Activated T-helper 1 cell treated with anti-CD3 and anti-CD28 coated beads, Interleukin-12 subunit alpha, Interleukin-12 subunit beta, Interleukin-2, Interleukin-4 antibody, amounts not matched to agents 30 ng/mL and 10 ng/mL and 1 ng/mL, durations not matched to agents 14 hours and 24 hours and 36 hours (primary cell): ENCODE measurements at regions of chr5 and their contacts with region 1.

Region 1: GRCh38 chr5:37370864-37371726 is at the start of gene NUP155:
- DNase-seq: peak; percentile 87
- H3K4me3 Mint-ChIP-seq: peak within 1 kb of the TSS; percentile 94
- H3K27ac Mint-ChIP-seq: peak within 1 kb of the TSS; percentile 97
- H3K4me1 Mint-ChIP-seq: peaks cover 37% of the 10 kb centered on the region
- H3K27me3 Mint-ChIP-seq: no peaks in the 10 kb centered on the region
- total RNA-seq, gene NUP155: 72.5 and 82.1 TPM in 2 replicates

Region 2: GRCh38 chr5:36151434-36152323 is 1219.4 kb before region 1 on chr5 and contains the starts of genes LMBRD2 and SKP2:
- intact Hi-C with region 1: loop called (anchors 5 kb)
- DNase-seq: peak; percentile 97
- H3K4me3 Mint-ChIP-seq: peak within 1 kb of the TSS; percentile 97
- H3K27ac Mint-ChIP-seq: peak within 1 kb of the TSS; percentile 79
- H3K4me1 Mint-ChIP-seq: peaks cover 59% of the 10 kb centered on the region
- H3K27me3 Mint-ChIP-seq: no peaks in the 10 kb centered on the region
- total RNA-seq, gene LMBRD2: 8.9 and 12.3 TPM in 2 replicates
- total RNA-seq, gene SKP2: 54.6 and 61.2 TPM in 2 replicates

Region 3: GRCh38 chr5:37738057-37738691 is 367.1 kb after region 1 on chr5:
- intact Hi-C with region 1: loop called (anchors 5 kb)
- DNase-seq: peak; percentile 4
- H3K4me3 Mint-ChIP-seq: peak overlapping the region; percentile 51
- H3K27ac Mint-ChIP-seq: peak overlapping the region; percentile 81
- H3K4me1 Mint-ChIP-seq: peaks cover 35% of the 10 kb centered on the region
- H3K27me3 Mint-ChIP-seq: no peaks in the 10 kb centered on the region